ENCODE measurements at regions of chr6 and their contacts with region 1.

Region 1: DNA sequence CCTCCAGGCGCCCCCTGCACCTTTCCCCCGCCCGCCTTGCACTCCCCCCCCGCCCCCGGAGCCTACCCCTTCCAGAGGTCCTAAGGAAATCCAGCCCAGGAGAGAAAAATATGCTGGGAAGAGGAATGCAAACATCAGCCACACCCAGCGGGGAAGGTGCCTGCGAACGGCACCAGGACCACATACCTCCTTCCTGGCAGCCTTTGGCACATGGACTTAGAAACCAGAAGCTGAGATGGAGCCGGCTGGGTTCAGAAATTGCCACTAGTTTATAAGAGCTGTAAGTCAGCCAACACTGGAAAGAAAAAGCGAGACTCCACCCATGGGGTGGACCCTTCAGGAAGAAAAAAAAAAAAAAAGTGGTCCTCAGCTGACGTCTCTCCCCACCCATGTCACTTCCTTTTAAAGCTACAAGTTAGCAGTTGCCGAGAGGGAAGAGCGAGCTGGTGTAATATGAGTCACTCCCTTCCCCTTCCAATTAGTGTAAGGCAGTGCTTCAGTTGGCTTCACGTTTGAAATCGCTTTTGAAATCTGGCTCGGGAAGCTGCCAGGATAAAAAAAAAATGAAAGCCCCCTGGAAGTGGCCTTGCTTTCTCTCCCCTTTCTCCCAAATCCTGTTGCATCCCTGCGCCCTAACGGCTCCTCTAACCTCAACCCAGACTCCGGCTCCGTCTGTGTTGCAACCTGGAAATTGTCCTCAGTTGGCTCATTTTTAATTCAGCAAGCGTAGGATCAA is at the start of gene AGPAT4:
- DNase-seq: peak; percentile 71
- ATAC-seq: peak; percentile 98
- H3K4me3 Mint-ChIP-seq: peak within 1 kb of the TSS; percentile 70
- H3K27ac Mint-ChIP-seq: peak within 1 kb of the TSS; percentile 86
- H3K4me1 Mint-ChIP-seq: peaks cover 23% of the 10 kb centered on the region
- H3K27me3 Mint-ChIP-seq: peaks cover 6% of the 10 kb centered on the region
- total RNA-seq, gene AGPAT4: 4.7 to 5.0 TPM

Region 2: DNA sequence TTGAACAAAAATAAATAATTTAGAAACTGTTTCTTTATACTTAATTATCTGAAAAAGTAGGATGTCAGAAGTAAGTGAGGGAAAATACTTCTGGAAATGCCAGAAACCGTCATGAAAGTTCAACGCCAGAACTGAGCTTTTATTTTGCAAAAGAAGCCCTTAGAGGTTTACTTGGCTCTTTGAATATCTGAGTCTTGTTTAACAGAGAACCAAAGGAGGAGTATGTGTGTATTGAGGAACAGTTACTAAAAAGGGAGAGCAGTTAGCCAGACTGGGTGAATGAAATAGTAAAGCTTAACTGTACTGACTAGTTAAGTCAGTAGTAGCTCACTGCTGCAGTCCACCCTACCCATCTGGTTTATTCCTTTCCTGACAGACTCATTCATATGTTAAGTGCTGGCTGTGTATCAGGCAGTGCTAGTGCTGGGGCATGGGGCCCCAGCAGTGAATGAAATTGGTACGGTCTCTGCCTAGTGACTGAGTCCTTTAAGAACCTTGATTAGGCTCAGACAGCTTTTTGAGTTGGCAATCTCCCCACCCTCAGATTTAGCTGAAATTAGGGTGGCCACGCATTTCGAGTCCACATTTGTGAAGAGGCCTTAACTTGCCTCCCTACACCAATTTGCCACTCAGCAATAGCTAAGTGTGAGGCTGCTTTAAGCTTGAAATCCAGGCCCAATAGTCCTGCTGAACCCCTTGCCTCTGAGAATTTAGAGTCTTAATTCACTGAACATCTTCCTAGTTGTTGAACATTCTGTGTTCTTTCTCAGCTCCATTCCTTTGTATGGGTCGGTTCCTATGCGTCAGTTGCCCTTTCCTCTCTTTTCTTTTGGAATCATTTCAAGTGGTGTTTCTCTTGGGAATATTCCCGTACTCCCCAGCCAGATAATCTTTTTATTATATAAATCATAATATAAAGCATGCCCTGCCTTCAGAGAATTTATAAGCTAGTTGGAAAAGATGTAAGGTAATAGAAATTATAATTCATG is 262.1 kb before region 1 on chr6:
- CTCF ChIA-PET with region 1: no interaction called
- POLR2A ChIA-PET with region 1: no interaction called
- intact Hi-C with region 1: no loop called
- DNase-seq: no peak
- ATAC-seq: no peak
- H3K4me3 Mint-ChIP-seq: no peak overlapping the region
- H3K27ac Mint-ChIP-seq: no peak overlapping the region
- H3K4me1 Mint-ChIP-seq: peaks cover 33% of the 10 kb centered on the region
- H3K27me3 Mint-ChIP-seq: no peaks in the 10 kb centered on the region

Region 3: DNA sequence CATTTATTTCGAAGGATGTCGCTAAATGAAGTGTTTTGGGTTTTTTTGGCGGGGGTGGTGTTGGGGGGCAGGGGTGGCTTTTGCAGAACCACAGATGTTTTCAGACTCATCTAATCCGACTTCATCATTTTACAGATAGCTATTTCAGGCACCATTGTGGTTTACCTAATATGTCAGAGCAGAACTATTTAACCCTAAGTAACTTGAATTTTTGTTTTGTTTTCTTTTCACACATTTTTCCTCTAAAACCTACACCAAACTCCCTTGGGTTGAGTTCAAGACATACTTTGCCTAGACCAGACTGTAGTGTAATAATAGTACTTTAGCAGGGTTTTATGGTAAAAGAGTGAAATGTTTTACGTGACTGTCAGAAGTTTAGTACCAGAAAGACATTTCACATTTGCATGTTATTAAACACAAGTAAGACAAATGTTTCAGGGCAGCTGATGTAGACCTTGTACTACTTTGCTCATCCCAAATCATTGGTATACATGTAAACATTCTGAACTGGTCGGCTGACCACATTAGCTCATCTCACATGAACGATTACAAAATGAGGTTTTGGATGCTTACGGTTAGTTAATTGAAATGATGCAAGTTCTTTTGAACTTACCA is 244.6 kb before region 1 on chr6:
- CTCF ChIA-PET with region 1: no interaction called
- POLR2A ChIA-PET with region 1: no interaction called
- intact Hi-C with region 1: no loop called
- DNase-seq: no peak
- ATAC-seq: peak; percentile 70
- H3K4me3 Mint-ChIP-seq: no peak overlapping the region
- H3K27ac Mint-ChIP-seq: peak overlapping the region; percentile 48
- H3K4me1 Mint-ChIP-seq: peaks cover 50% of the 10 kb centered on the region
- H3K27me3 Mint-ChIP-seq: no peaks in the 10 kb centered on the region

Region 4: DNA sequence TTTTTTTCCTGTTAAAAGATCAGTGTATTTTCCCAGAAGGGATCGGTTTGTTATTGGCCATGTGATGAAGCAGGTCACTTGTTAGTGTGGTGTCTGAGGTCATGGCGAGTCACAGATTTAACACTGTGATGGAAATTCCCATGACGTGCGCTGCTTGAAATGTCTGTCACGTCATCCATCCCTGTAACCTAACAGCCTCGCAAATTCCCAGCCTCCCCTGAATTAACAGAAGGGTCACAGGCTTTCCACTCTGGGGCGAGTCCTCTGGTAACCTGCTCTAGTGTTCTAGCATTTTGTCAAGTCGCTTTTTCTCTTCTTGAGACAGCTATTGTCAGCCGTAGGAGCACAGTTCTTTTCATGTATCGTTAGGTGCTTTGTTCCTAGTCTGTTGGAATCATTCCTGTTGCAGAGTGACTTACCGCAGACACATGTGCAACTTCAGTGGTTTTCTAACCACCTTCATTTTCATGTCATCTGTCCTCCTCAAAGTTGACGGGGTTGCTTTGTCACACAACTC is 145.2 kb before region 1 on chr6:
- CTCF ChIA-PET with region 1: no interaction called
- POLR2A ChIA-PET with region 1: no interaction called
- intact Hi-C with region 1: loop called (anchors 5 to 10 kb)
- DNase-seq: peak; percentile 76
- ATAC-seq: peak; percentile 77
- H3K4me3 Mint-ChIP-seq: peak overlapping the region; percentile 50
- H3K27ac Mint-ChIP-seq: peak overlapping the region; percentile 89
- H3K4me1 Mint-ChIP-seq: peaks cover 34% of the 10 kb centered on the region
- H3K27me3 Mint-ChIP-seq: no peaks in the 10 kb centered on the region

Region 5: DNA sequence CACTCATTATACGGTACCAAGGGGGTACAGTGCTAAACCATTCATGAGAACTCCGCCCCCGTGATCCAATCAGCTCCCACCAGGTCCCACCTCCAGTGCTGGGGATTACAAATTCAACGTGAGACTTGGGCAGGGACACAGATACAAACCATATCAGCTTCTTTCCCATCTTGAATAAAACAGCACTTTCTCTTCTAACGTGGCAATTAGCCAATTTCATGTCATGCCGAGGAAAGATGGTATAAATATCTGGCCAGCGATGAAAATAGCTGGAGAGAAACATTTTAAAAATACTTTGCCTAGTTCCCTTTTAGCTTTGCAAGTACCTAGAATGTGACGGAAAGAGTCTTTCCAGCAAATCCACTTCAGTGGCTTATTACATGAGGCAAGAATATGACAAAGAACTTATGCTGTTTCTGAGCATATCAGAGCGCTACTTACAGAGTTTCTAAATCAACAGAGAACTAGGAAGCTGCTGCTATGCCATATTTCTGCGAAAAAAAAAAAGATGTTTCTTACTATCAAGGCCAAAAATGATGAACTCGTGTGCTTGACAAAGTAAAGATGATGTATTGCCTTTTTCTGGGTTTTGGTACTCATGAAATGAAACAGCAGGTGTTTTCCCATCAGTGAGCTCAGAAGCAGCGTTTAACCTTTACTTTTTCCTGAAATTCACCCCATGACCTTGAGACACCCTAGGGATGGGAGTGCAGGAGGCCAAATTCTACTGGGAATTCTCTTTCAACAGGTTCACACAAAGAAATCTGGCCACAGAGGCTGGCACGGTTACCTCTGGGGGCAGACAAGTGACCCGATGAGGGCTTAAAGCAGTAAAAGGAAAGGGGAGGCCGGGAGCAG is 37.9 kb before region 1 on chr6:
- CTCF ChIA-PET with region 1: interaction called, 3 read pairs
- POLR2A ChIA-PET with region 1: interaction called, 6 read pairs
- intact Hi-C with region 1: loop called (anchors 1 kb)
- DNase-seq: peak; percentile 19
- ATAC-seq: peak; percentile 87
- H3K4me3 Mint-ChIP-seq: no peak overlapping the region
- H3K27ac Mint-ChIP-seq: peak overlapping the region; percentile 81
- H3K4me1 Mint-ChIP-seq: peaks cover 25% of the 10 kb centered on the region
- H3K27me3 Mint-ChIP-seq: no peaks in the 10 kb centered on the region

Region 6: GRCh38 chr6:162727309-162728182 is 1453.6 kb after region 1 on chr6 and contains the starts of genes PACRG and PRKN:
- CTCF ChIA-PET with region 1: no interaction called
- POLR2A ChIA-PET with region 1: no interaction called
- intact Hi-C with region 1: loop called in 1 of 2 experiments (anchors 2 kb)
- DNase-seq: peak; percentile 99
- ATAC-seq: peak; percentile 97
- H3K4me3 Mint-ChIP-seq: peak within 1 kb of the TSS; percentile 77
- H3K27ac Mint-ChIP-seq: peak within 1 kb of the TSS; percentile 84
- H3K4me1 Mint-ChIP-seq: peaks cover 11% of the 10 kb centered on the region
- H3K27me3 Mint-ChIP-seq: no peaks in the 10 kb centered on the region
- total RNA-seq, gene PACRG: not detected
- total RNA-seq, gene PRKN: 0.56 to 0.87 TPM

Measured in activated CD4-positive, alpha-beta T cell treated with anti-CD3 and anti-CD28 coated beads for 36 hours (primary cell).